ENCODE measurements at regions of chr3 and their contacts with region 1.

Region 1: GRCh38 chr3:15108082-15108545 is 9.2 kb upstream of the RBSN start:
- DNase-seq: peak; percentile 81
- H3K4me3 ChIP-seq: no peak overlapping the region
- H3K27ac ChIP-seq: no peak overlapping the region
- H3K4me1 ChIP-seq: peaks cover 3% of the 10 kb centered on the region
- CTCF ChIP-seq: peak; percentile 94

Region 2: DNA sequence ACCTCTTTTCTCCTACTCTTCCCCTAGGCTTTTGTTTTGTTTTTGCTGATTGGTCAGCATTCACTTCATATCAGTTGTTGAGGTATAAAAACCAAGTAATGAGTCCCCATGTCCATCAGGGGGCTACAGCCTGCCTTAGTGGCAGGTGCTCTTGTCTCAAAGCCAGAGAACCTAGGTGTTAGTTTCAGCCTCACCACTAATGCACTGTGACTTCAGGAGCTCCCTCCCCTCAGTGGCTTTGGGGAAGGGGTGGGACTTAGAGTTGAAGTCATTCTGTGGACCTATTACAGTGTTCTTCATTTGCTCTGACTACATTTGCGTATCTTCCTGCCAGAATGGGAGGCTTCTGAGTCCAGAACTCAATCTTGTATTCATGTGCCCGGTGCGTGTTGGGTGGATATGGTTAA is 119.1 kb before region 1 on chr3:
- CTCF ChIA-PET with region 1: no interaction called
- POLR2A ChIA-PET with region 1: no interaction called
- intact Hi-C with region 1: no loop called
- DNase-seq: peak; percentile 71
- H3K4me3 ChIP-seq: no peak overlapping the region
- H3K27ac ChIP-seq: no peak overlapping the region
- H3K4me1 ChIP-seq: peaks cover 15% of the 10 kb centered on the region
- CTCF ChIP-seq: peak; percentile 48

Region 3: DNA sequence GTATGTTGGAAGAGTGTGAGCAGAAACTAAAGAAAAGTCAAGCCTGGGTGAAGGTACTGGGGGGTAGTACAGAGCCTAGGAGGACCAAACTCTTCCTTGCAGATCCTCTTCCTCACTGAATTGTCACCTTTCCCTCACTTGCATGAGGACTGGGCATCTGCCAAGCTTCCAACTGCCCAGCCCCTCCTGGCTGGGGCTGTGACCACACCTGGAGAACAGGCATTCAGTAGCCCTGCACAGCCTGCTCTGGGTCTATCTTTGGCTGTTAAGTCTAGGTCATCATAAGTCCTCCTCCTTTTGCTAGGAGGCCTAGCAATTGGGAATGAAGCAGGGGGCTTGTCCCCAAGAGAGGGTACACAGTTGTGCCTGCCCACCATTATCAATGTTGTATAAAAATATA is 153.2 kb after region 1 on chr3:
- CTCF ChIA-PET with region 1: no interaction called
- POLR2A ChIA-PET with region 1: no interaction called
- intact Hi-C with region 1: loop called (anchors 5 kb)
- DNase-seq: no peak
- H3K4me3 ChIP-seq: no peak overlapping the region
- H3K27ac ChIP-seq: no peak overlapping the region
- H3K4me1 ChIP-seq: no peaks in the 10 kb centered on the region
- CTCF ChIP-seq: no peak

Measured in OCI-LY7 (cell line).